ENCODE measurements at regions of chr16 and their contacts with region 1.

Region 1: DNA sequence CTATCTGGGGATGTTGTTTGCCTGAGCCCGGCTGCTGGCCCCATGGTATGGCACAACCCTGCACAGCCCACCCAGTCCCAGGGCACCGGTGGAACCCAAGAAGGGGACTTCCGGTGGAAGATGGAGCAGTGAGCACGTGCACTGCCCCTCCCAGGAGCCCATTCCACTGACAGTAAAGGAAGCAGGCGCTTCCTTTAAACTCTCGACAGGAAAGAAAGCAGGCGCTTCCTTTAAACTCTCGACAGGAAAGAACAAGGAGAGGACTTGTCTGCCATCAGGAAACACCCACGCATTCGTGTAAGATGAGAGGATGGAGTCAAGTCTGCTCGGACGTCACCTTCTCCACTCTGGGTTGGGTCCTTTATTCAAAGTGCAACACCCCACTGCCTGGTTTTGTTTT is 53.7 kb downstream of the IL21R start:
- DNase-seq: no peak
- H3K4me3 ChIP-seq: no peak overlapping the region
- H3K27ac ChIP-seq: no peak overlapping the region
- H3K4me1 ChIP-seq: peaks cover 11 to 45% (median 30%) of the 10 kb centered on the region in 6 donors
- H3K27me3 ChIP-seq: peaks cover 0 to 9% (median 0%) of the 10 kb centered on the region in 7 donors
- CTCF ChIP-seq: no peak
- POLR2A ChIP-seq: no peak

Region 2: GRCh38 chr16:27154705-27155521 is 300.8 kb before region 1 on chr16:
- intact Hi-C with region 1: loop called (anchors 5 kb)
- DNase-seq: peak; percentile 90
- H3K4me3 ChIP-seq: no peak overlapping the region
- H3K27ac ChIP-seq: no peak overlapping the region
- H3K4me1 ChIP-seq: peaks cover 0 to 20% (median 8%) of the 10 kb centered on the region in 6 donors
- H3K27me3 ChIP-seq: no peaks in the 10 kb centered on the region
- CTCF ChIP-seq: peak; percentile 92 to 98 (median 97)
- POLR2A ChIP-seq: no peak

Region 3: GRCh38 chr16:27217256-27217655 is 238.4 kb before region 1 on chr16:
- intact Hi-C with region 1: no loop called
- DNase-seq: no peak
- H3K4me3 ChIP-seq: no peak overlapping the region
- H3K27ac ChIP-seq: no peak overlapping the region
- H3K4me1 ChIP-seq: no peaks in the 10 kb centered on the region
- H3K27me3 ChIP-seq: no peaks in the 10 kb centered on the region
- CTCF ChIP-seq: no peak
- POLR2A ChIP-seq: no peak